ENCODE measurements at regions of chr9 and their contacts with region 1.

Region 1: GRCh38 chr9:15882328-15882727 is 329.5 kb downstream of the CCDC171 start:
- DNase-seq: peak; percentile 83
- H3K4me3 ChIP-seq: peak overlapping the region; percentile 70
- H3K27ac ChIP-seq: peak overlapping the region; percentile 97
- H3K4me1 ChIP-seq: peaks cover 8% of the 10 kb centered on the region
- H3K27me3 ChIP-seq: no peaks in the 10 kb centered on the region
- CTCF ChIP-seq: no peak

Region 2: DNA sequence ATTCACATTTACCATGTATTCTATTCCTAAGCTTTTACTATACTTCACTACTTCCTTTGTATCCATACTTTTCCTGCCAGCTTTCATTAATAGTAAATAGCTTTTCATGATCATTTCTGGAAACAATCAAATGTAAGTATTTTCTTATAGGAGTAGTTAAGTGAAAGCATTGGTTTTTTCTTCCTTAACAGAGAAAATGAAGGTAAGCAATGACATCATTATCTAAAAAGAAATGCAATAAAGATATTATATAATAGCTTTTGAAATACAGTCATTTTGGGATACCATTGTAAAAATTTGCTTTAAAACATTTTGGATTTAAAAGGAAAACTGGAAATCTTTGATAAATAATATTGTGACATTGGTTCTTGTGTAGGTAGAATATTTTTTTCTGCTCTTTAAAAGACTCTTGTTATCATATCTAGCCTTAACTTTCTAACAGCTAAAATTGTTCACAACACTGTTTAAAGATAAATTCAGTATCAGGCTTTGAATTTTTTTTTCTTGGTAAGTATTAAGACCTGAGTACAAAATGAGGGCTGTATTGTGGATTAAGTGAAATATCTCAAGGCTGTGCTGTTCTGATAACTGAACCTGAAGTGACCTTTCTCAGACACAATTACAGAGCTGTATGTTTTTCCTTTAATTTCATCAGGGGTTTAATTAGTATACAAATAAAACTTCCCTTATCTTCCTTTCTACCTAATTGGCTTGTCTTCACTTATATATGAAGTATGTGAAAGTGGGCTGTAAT is 39.2 kb before region 1 on chr9:
- CTCF ChIA-PET with region 1: no interaction called
- POLR2A ChIA-PET with region 1: no interaction called
- intact Hi-C with region 1: loop called (anchors 5 kb)
- DNase-seq: peak; percentile 14
- H3K4me3 ChIP-seq: no peak overlapping the region
- H3K27ac ChIP-seq: peak overlapping the region; percentile 87
- H3K4me1 ChIP-seq: peaks cover 27% of the 10 kb centered on the region
- H3K27me3 ChIP-seq: no peaks in the 10 kb centered on the region
- CTCF ChIP-seq: no peak

Region 3: GRCh38 chr9:15909297-15909696 is 27.0 kb after region 1 on chr9:
- CTCF ChIA-PET with region 1: no interaction called
- POLR2A ChIA-PET with region 1: no interaction called
- intact Hi-C with region 1: no loop called
- DNase-seq: no peak
- H3K4me3 ChIP-seq: no peak overlapping the region
- H3K27ac ChIP-seq: no peak overlapping the region
- H3K4me1 ChIP-seq: no peaks in the 10 kb centered on the region
- H3K27me3 ChIP-seq: no peaks in the 10 kb centered on the region
- CTCF ChIP-seq: no peak

Measured in A673 (cell line).